PC-9 (cell line): ENCODE measurements at regions of chr9 and their contacts with region 1.

Region 1: GRCh38 chr9:129487642-129488409 is 133.1 kb downstream of the C9orf50 start:
- DNase-seq: no peak
- H3K4me3 ChIP-seq: peak overlapping the region; percentile 66
- H3K27ac ChIP-seq: peak overlapping the region; percentile 91
- H3K4me1 ChIP-seq: peaks cover 72% of the 10 kb centered on the region
- H3K27me3 ChIP-seq: no peaks in the 10 kb centered on the region
- CTCF ChIP-seq: no peak

Region 2: GRCh38 chr9:129235931-129236331 is 251.9 kb before region 1 on chr9:
- CTCF ChIA-PET with region 1: interaction called, 11 read pairs
- POLR2A ChIA-PET with region 1: no interaction called
- intact Hi-C with region 1: no loop called
- DNase-seq: peak in 1 of 2 experiments; percentile 22
- H3K4me3 ChIP-seq: no peak overlapping the region
- H3K27ac ChIP-seq: no peak overlapping the region
- H3K4me1 ChIP-seq: peaks cover 11% of the 10 kb centered on the region
- H3K27me3 ChIP-seq: no peaks in the 10 kb centered on the region
- CTCF ChIP-seq: no peak